Motor neuron (in vitro differentiated cells): ENCODE measurements at regions of chr4 and their contacts with region 1.

Region 1: DNA sequence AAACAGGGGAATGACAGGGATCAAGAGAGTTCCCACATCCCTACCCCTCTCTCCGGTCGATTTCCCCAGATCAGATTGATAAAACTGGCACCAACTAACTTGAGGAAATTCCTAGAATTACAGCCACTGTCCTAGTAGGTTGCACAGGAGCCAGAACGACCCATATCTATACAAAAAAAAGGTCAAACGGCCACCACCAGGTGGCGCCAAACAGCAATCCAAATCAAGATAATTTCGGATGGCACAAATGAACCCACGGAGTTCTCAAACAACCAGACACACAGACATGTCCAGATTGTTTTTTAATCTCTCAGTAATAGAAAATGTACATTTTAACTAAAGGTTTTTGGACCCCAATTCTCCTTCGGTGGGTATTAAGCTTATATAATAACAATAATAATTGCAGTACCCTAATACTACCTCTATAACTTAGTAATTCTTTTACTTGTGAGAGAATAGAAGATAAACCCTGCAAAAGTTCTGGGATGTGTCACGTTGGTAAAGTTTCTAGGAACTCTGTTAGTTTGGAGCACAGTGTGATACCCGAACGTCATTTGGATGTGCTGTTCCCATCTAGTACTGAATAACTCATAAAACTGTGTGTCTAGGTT is 212.6 kb downstream of the SPOCK3 start:
- ATAC-seq: peak in 5 of 8 experiments; percentile 39 to 80 (median 64)
- H3K4me3 ChIP-seq: no peak overlapping the region
- H3K27ac ChIP-seq: no peak overlapping the region
- H3K4me1 ChIP-seq: no peaks in the 10 kb centered on the region

Region 2: DNA sequence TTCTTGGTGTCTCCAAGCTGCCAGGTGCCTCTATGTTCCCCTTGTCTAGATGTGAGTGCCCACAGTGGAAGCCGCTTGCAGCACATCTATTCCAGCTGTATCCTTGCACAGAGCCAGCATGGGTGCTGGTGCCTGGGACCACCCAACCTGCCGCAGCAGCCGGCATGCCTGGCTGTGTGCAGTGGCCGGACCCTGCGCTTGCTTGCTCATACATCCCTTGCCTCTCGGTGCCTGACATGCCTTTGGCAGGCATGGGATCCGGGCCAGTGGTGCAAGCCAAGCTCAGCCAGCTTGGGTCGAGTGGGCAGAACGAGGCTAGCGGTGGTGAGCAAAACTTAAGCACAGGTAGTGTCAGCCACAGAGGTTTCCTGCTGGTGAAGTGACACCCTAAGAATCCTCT is 793.5 kb before region 1 on chr4:
- in situ Hi-C with region 1: no loop called
- ATAC-seq: no peak
- H3K4me3 ChIP-seq: no peak overlapping the region
- H3K27ac ChIP-seq: no peak overlapping the region
- H3K4me1 ChIP-seq: no peaks in the 10 kb centered on the region

Region 3: GRCh38 chr4:168076989-168077725 is 1055.5 kb after region 1 on chr4:
- in situ Hi-C with region 1: loop called in 1 of 9 experiments (anchors 25 kb)
- ATAC-seq: peak in 6 of 8 experiments; percentile 49 to 70 (median 58)
- H3K4me3 ChIP-seq: no peak overlapping the region
- H3K27ac ChIP-seq: no peak overlapping the region
- H3K4me1 ChIP-seq: peaks cover 0 to 2% of the 10 kb centered on the region in 2 donors